AG04449 (cell line): ENCODE measurements at regions of chr6 and their contacts with region 1.

Region 1: DNA sequence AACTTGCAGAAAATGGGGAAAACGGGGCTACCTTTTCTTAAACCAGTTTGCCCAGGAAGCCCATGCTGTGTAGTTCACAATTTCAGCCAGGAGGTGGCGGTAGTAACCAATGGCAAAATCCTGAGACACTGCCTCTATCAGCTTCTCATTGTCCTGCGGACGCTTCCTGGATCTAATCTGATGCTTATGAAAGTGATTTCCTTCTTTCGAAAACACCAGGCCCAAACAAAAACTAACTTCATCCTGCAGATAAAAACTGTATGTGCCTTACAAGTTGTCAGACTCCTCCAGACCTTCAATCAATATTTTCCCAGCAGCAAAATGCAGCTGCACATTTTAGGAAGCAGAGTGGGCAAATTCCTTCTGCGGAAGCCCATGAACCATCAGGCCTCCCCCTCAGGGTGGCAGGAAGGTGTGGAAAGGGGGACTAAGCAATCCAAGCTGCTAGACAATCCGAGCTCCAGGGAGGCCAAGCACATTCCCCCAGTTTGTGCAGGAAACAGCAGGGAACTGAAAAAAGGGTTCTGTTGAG is 88.5 kb downstream of the LY86 start:
- DNase-seq: no peak
- H3K4me3 ChIP-seq: no peak overlapping the region
- CTCF ChIP-seq: peak; percentile 87

Region 2: DNA sequence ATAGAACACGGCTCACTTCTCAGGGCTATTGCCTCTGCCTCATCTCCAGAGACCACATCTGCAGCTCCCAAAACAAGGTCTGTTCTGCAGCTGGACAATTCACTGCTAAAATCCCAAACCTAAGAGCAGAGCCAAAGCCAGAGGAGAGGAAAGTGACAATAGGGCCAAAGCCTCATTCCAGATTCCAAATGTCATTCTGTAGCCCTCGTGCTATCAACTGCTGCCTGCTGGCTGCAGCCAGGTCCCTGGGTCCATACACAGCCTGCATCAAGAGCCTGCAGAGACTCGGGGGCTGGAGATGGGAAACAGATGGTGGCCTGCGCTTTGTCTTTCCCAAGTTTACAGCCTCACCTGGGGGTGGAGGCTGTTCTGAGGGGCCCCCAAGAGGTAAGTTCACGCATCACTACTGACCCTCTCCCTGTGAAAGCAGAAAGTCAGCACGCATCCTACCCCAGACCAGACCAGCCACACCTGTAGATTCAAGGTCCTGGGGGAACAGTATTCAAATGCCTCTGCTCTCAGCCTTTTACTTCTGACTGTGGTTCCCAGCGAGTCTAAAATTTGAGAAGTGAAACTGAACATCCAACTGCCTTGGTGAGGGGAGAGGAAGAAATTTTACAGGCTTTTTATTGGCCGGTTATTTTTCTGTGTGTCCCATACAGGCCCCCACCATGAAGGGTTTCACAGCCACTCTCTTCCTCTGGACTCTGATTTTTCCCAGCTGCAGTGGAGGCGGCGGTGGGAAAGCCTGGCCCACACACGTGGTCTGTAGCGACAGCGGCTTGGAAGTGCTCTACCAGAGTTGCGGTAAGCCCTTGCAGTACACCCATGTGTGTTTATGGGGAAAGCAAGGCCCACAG is 88.7 kb before region 1 on chr6 and contains the start of gene LY86:
- CTCF ChIA-PET with region 1: no interaction called
- POLR2A ChIA-PET with region 1: no interaction called
- DNase-seq: no peak
- H3K4me3 ChIP-seq: no peak within 1 kb of the TSS
- CTCF ChIP-seq: no peak

Region 3: GRCh38 chr6:6661684-6662083 is 15.3 kb before region 1 on chr6:
- CTCF ChIA-PET with region 1: interaction called, 10 read pairs
- POLR2A ChIA-PET with region 1: no interaction called
- DNase-seq: no peak
- H3K4me3 ChIP-seq: no peak overlapping the region
- CTCF ChIP-seq: no peak